ENCODE measurements at regions of chr3 and their contacts with region 1.

Region 1: GRCh38 chr3:149657926-149658733 is at the start of gene WWTR1:
- DNase-seq: peak; percentile 98
- H3K4me3 ChIP-seq: peak within 1 kb of the TSS; percentile 77 to 93 (median 81)
- H3K27ac ChIP-seq: peak within 1 kb of the TSS; percentile 92 to 99 (median 98)
- H3K4me1 ChIP-seq: peaks cover 32 to 58% (median 55%) of the 10 kb centered on the region in 4 donors
- H3K27me3 ChIP-seq: no peaks in the 10 kb centered on the region
- CTCF ChIP-seq: peak in 2 of 3 experiments; percentile 34 to 41
- EP300 ChIP-seq: peak; percentile 40
- POLR2A ChIP-seq: peak; percentile 75
- total RNA-seq, gene WWTR1: 346 to 535 (median 463) TPM

Region 2: DNA sequence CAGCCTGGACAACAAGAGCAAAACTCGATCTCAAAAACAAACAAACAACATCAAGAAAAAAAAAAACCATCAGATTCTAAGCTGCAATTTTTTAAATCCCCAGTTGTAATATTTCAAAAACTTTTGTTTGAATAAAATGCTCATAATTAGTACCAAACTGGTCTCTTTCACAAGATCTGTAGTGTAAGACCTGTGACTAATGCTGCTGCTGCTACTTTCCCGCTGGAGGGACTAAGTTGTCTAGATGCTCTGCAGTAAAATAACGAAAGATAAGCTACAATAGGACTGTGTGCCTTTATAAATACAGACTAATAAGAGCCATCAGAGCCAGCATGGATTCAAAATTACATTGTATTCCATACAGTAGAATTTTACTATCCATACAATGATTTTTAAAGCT is 138.2 kb before region 1 on chr3:
- intact Hi-C with region 1: loop called (anchors 5 kb)
- DNase-seq: no peak
- H3K4me3 ChIP-seq: no peak overlapping the region
- H3K27ac ChIP-seq: no peak overlapping the region
- H3K4me1 ChIP-seq: peaks cover 3 to 16% (median 12%) of the 10 kb centered on the region in 4 donors
- H3K27me3 ChIP-seq: no peaks in the 10 kb centered on the region
- CTCF ChIP-seq: no peak
- EP300 ChIP-seq: no peak
- POLR2A ChIP-seq: no peak

Region 3: DNA sequence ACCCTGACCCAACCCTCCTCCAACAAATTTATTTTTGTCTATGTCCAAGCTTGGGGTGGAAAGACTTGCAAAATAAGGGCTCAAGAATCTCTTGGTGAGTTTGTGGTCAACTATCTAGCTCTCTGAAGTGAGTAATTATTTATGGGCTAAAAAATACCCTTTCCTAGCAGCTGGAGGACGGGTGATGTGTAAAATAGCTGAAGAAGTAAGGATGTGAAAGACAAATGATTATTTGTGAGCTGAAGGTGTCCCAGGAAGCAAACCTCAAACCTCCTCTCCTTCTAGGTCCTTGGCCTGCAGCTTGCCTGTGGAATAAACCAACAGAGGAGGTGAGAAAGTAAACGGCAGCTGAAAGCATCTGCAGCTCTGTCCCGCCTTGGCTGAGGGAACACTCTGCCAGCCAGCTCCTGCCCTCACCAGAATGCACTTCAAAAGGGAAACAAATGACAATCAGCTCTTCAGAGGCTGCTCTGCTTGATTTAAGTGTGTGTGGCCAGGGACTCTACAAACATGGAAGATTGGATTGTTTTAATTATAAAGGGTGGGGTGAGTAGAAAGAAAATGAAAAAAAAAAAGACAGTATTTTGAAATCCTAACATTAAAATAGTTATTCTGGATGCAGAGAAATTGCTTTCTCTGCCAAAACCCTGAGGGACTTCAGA is 123.3 kb before region 1 on chr3:
- intact Hi-C with region 1: loop called (anchors 5 kb)
- DNase-seq: no peak
- H3K4me3 ChIP-seq: peak overlapping the region in 2 of 4 donors; percentile 15 to 20
- H3K27ac ChIP-seq: peak overlapping the region; percentile 53 to 81 (median 74)
- H3K4me1 ChIP-seq: peaks cover 43 to 98% (median 94%) of the 10 kb centered on the region in 4 donors
- H3K27me3 ChIP-seq: no peaks in the 10 kb centered on the region
- CTCF ChIP-seq: no peak
- EP300 ChIP-seq: no peak
- POLR2A ChIP-seq: no peak

Region 4: DNA sequence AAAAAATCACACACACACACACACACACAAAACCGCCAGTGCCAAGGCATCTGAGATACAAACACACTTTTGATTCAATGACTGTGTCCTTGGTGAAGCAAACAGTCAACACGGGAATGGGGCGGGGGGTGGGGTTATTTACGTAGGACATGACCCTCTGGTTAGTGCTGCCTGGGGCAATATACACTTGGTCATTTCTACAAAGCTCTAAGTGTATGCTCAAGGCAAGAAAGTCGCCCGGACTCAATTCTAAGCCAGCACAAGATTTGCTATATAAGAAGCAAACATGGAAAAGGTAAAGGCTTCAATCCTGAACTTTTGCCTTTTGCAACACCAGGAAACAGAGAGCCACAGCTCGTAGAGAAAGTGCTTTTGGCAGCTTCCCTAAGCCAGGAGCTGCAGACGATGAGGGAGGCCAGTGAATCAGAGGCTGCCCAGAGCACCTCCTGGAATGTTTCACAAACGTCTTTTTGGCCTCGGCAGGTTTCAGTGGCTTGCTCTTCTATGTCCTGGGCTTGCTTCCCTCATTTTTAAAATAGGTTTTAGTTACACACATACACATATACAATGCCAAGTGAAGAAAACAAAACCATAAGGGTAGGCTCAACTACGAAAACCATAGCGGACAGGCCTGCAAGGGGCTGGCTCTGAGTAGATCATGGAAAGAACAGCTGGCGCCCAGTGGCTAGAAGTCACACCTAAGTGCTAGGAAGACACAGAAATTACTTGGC is 110.0 kb before region 1 on chr3:
- intact Hi-C with region 1: loop called (anchors 5 kb)
- DNase-seq: peak; percentile 93
- H3K4me3 ChIP-seq: peak overlapping the region in 3 of 4 donors; percentile 22 to 29 (median 23)
- H3K27ac ChIP-seq: peak overlapping the region; percentile 77 to 85 (median 80)
- H3K4me1 ChIP-seq: peaks cover 13 to 91% (median 81%) of the 10 kb centered on the region in 4 donors
- H3K27me3 ChIP-seq: no peaks in the 10 kb centered on the region
- CTCF ChIP-seq: no peak
- EP300 ChIP-seq: no peak
- POLR2A ChIP-seq: no peak

Region 5: DNA sequence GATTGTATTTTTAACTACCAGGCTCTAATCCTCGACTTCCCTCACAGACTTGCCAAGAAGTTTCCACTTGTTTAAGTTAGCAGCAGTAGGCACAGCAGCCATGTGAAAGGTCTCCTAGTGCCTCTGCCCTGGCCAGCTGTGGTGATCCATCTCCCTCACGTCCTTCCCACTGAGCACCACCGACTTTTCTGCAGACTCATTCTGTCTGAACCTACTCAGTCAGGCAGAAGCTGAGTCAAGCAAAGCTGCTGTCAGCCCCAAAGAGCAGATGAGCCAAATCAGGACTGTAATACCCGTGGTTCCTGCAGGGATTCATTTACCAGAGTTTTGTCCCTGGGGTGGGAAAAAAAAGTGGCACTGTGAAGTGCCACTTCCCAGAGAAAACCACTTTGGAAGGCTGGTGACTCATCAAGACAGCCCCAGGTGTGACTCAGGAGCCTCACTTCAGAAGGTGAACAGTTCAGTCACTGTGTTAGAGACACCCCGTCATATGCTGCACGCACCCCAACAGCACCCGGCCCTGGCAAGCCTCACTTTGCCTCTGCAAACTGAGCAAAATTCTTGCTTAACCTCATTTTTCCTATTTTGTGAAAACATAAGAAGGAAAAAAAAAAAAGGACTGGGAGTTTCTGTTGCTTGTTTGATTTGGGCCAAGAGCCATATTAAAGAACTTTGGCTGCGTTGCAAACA is 76.3 kb before region 1 on chr3:
- intact Hi-C with region 1: loop called (anchors 5 kb)
- DNase-seq: no peak
- H3K4me3 ChIP-seq: no peak overlapping the region
- H3K27ac ChIP-seq: peak overlapping the region; percentile 29 to 84 (median 57)
- H3K4me1 ChIP-seq: peaks cover 55 to 99% (median 93%) of the 10 kb centered on the region in 4 donors
- H3K27me3 ChIP-seq: no peaks in the 10 kb centered on the region
- CTCF ChIP-seq: peak in 1 of 3 experiments; percentile 2
- EP300 ChIP-seq: no peak
- POLR2A ChIP-seq: no peak